Endothelial cell of umbilical vein (primary cell): ENCODE measurements at regions of chr11 and their contacts with region 1.

Region 1: GRCh38 chr11:2420502-2421225 is 20.1 kb downstream of the TSSC4 start:
- DNase-seq: peak; percentile 59
- H3K4me3 ChIP-seq: no peak overlapping the region
- H3K27ac ChIP-seq: no peak overlapping the region
- H3K4me1 ChIP-seq: no peaks in the 10 kb centered on the region
- H3K27me3 ChIP-seq: no peaks in the 10 kb centered on the region
- CTCF ChIP-seq: peak; percentile 88 to 97
- POLR2A ChIP-seq: no peak

Region 2: DNA sequence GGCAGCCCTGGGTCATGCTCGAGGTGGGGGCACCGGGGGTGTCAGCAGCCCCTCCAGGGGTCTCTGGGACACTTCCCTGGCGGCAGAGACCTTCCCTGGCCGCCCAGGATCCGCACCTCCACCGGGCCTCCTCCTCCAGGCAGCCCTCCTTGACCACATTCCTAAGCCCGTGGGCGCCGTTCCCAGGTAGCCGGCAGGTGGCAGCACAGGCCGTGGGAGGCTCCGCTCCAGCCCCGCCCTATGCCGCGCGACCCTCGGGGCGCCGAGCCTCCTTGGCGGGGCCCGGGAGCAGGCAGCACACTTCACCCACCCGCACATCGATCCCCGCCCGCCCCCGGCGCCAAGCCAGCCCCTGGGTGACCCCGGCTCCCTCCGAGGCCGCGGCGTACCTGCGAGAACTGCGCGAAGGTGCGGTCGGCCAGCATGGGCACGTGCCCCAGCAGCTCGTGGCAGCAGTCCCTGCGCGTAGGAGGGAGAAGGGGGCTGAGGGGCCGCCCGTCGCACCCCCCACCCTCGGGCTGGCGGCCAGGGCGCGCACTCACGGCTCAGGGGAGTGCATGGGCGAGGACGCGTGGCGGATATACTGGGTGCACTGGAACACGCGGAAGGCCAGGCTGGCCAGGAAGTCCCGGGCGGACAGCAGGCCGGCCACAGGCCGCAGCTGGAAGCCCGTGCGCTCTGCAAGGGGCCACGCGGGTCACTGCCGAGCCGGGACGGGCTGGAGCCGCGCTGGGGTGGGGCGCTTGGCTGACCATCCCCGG is 254.4 kb before region 1 on chr11:
- CTCF ChIA-PET with region 1: interaction called, 9 read pairs
- POLR2A ChIA-PET with region 1: no interaction called
- dilution Hi-C with region 1: no loop called
- intact Hi-C with region 1: loop called (anchors 1 kb)
- DNase-seq: no peak
- H3K4me3 ChIP-seq: no peak overlapping the region
- H3K27ac ChIP-seq: no peak overlapping the region
- H3K4me1 ChIP-seq: no peaks in the 10 kb centered on the region
- H3K27me3 ChIP-seq: no peaks in the 10 kb centered on the region
- CTCF ChIP-seq: peak; percentile 37 to 58
- POLR2A ChIP-seq: no peak

Region 3: GRCh38 chr11:2196970-2197770 is 223.5 kb before region 1 on chr11:
- CTCF ChIA-PET with region 1: interaction called, 67 read pairs
- POLR2A ChIA-PET with region 1: no interaction called
- dilution Hi-C with region 1: no loop called
- intact Hi-C with region 1: loop called (anchors 1 kb)
- DNase-seq: peak; percentile 38
- H3K4me3 ChIP-seq: no peak overlapping the region
- H3K27ac ChIP-seq: no peak overlapping the region
- H3K4me1 ChIP-seq: no peaks in the 10 kb centered on the region
- H3K27me3 ChIP-seq: no peaks in the 10 kb centered on the region
- CTCF ChIP-seq: peak; percentile 63 to 81
- POLR2A ChIP-seq: no peak

Region 4: DNA sequence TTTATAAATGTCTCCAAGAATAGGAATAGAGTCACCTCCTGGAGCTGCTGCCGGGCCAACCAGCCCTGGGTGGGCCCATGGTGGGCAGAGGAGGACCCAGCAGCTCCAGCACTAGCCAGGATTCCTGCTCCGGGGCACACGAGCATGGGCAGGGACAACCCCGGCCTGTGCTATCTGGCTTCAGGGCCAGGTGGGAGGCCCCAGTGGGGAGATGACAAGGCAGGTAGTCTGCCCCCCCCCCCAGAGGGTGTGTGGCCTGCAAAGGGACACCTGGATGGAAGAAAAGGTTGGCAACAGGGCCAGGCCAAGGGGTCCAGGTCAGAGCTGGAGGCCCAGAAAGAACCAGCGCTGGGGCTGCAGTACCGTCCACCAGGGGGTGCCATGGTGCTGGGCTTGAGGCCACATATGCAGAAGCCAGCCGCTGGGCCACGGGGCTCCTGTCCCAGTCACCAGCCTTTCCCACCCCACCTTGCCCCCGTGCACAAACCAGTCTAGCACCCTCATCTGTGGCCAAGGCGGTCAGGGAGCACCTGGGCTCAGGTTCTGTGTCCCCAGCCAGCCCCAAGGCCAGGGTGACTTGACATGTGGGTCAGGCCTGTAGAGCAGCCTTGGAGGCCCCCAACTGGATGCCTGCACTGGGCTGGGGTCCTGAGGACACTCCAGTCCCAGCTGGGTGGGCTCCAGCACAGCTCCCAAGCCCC is 115.4 kb before region 1 on chr11:
- CTCF ChIA-PET with region 1: interaction called, 829 read pairs
- POLR2A ChIA-PET with region 1: interaction called, 7 read pairs
- dilution Hi-C with region 1: no loop called
- intact Hi-C with region 1: loop called (anchors 1 kb)
- DNase-seq: peak; percentile 56
- H3K4me3 ChIP-seq: no peak overlapping the region
- H3K27ac ChIP-seq: no peak overlapping the region
- H3K4me1 ChIP-seq: peaks cover 7% of the 10 kb centered on the region
- H3K27me3 ChIP-seq: no peaks in the 10 kb centered on the region
- CTCF ChIP-seq: peak; percentile 85 to 98
- POLR2A ChIP-seq: no peak

Region 5: GRCh38 chr11:2377511-2378443 is 42.9 kb before region 1 on chr11:
- CTCF ChIA-PET with region 1: interaction called, 16 read pairs
- POLR2A ChIA-PET with region 1: no interaction called
- dilution Hi-C with region 1: no loop called
- intact Hi-C with region 1: loop called (anchors 2 kb)
- DNase-seq: peak; percentile 58
- H3K4me3 ChIP-seq: peak overlapping the region; percentile 72 to 80 (median 75)
- H3K27ac ChIP-seq: peak overlapping the region; percentile 91
- H3K4me1 ChIP-seq: peaks cover 37% of the 10 kb centered on the region
- H3K27me3 ChIP-seq: no peaks in the 10 kb centered on the region
- CTCF ChIP-seq: no peak
- POLR2A ChIP-seq: no peak